ENCODE measurements at regions of chr16 and their contacts with region 1.

Region 1: DNA sequence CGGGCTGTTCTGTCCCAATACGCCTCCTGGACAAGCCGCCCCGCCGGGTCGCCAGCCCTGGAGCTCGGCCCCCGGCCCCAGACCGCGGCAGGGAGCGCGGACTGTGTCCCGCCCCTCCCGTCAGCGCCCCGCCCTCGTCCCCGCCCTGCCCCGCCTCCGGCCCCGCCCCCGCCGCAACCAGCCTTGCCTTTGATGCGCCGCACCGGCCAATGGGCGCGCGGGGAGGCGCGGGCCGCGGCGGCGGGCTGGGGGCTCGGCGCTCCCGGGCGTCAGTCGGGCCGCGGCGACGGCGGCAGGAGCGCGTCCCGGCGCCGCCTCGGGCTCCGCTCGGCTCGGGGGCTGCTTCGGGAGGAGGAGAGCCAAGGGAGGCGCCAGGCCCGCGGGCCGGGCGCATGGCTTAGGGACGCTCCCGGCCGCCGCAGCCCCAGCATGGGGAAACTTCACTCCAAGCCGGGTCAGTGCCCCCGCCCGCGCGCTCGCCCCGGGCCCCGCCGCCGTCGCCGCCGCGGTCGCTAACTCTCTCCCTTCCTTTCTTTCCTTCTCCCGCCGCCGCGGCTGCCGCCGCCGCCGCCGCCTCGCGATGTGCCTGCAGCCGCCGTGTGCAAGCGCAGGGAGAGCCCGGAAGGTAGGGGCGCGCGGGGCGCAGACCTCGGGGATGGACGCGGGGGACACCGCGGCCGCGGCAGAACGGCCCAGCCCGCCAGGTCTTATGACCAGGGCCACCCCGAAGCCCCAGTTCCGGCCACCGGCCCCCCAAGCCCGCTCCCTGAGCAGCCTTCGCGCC is at the start of gene NKD1:
- DNase-seq: peak; percentile 72
- ATAC-seq: peak; percentile 88
- H3K4me3 Mint-ChIP-seq: peak within 1 kb of the TSS; percentile 91
- H3K27ac Mint-ChIP-seq: peak within 1 kb of the TSS; percentile 70
- H3K4me1 Mint-ChIP-seq: peaks cover 7% of the 10 kb centered on the region
- H3K27me3 Mint-ChIP-seq: peaks cover 10% of the 10 kb centered on the region
- CTCF ChIP-seq: no peak
- total RNA-seq, gene NKD1: 0.49 and 1.5 TPM in 2 replicates

Region 2: DNA sequence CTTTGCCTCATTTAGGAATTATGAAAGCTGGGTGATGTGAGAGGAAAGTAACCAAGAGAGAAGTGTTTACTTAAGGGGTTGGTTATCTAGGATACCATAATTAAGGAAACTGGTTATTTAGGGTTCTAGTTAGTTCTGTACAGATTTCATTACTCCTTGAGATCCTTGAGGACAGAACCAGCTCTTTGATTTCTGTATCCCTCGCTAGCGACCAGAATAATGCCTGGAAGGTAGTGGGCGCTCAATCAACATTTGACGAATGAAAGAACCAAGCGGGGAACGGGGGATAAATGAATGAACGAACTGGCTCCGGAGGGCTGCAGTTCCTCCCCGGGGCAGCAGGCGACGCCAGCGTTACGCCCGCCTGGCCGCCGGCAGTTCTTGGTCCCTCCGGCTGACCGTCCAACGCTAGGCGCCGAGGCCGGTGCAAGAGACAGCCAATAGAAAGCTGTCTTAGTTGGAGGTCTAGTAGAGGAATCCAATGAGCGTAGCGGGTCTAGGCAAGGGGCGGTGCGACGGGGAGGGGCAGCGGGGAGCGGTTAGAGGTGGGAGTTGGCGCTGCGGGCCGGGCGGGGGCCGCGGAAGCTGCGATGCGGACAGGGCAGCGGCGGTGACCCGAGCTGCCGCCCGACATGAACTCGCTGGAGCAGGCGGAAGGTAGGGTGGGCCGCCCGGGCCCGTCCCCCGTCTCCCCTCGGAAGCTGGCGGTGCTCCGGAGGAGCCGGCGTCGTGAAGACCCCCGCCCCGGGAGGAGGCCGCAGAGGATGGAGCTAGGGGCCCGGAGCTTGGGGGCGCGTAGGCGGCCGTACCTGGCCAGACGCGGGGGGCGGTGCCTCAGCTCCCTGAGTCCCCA is 523.4 kb before region 1 on chr16 and contains the start of gene CNEP1R1:
- CTCF ChIA-PET with region 1: no interaction called
- POLR2A ChIA-PET with region 1: no interaction called
- intact Hi-C with region 1: loop called (anchors 5 kb)
- DNase-seq: peak; percentile 87
- ATAC-seq: peak; percentile 95
- H3K4me3 Mint-ChIP-seq: peak within 1 kb of the TSS; percentile 96
- H3K27ac Mint-ChIP-seq: peak within 1 kb of the TSS; percentile 83
- H3K4me1 Mint-ChIP-seq: peaks cover 19% of the 10 kb centered on the region
- H3K27me3 Mint-ChIP-seq: peaks cover 6% of the 10 kb centered on the region
- CTCF ChIP-seq: peak; percentile 82
- total RNA-seq, gene CNEP1R1: 22.1 and 31.0 TPM in 2 replicates

Region 3: DNA sequence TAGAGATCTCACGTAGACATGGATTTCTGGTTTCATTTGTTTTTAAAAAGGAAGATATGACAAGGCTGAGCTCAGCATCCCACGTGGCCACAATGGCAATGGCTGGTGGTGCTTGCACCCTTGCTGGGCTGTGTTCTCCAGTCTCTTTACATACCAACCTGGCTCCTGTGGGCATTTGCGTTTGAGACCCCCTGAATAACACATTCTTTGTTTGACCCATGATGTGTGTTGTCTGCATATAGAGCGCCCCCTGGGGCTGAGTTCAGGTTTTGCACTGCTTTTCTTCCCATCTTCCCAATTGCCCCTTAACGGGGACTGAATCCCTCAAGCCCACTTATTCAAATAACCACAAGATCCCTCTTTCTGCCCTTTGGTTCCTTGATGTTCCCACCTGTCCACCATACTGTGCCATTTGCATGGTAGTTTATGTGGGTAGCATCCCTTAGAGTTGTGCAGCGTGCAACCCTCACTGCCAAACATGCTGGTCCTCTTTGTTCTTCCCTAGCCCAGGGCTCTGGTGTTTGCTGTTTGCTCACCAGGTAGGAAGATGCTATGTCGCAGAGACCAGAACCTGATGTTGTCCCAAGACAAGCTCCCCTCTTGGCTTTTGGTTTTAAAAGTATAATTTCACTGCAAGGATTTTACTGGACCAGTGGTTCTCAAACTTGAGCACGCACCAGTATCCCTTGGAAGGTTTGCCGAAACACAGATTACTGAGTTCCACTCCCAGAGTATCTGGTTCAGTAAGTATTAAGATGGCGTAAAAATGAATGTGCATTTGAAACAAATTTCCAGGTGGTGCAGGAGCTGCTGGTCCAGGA is 38.6 kb before region 1 on chr16:
- CTCF ChIA-PET with region 1: no interaction called
- POLR2A ChIA-PET with region 1: no interaction called
- intact Hi-C with region 1: no loop called
- DNase-seq: no peak
- ATAC-seq: no peak
- H3K4me3 Mint-ChIP-seq: no peak overlapping the region
- H3K27ac Mint-ChIP-seq: no peak overlapping the region
- H3K4me1 Mint-ChIP-seq: no peaks in the 10 kb centered on the region
- H3K27me3 Mint-ChIP-seq: peaks cover 9% of the 10 kb centered on the region
- CTCF ChIP-seq: no peak

Region 4: GRCh38 chr16:50593410-50594150 is 45.3 kb after region 1 on chr16:
- CTCF ChIA-PET with region 1: interaction called, 4 read pairs
- POLR2A ChIA-PET with region 1: interaction called, 4 read pairs
- intact Hi-C with region 1: loop called (anchors 1 kb)
- DNase-seq: no peak
- ATAC-seq: no peak
- H3K4me3 Mint-ChIP-seq: no peak overlapping the region
- H3K27ac Mint-ChIP-seq: no peak overlapping the region
- H3K4me1 Mint-ChIP-seq: peaks cover 17% of the 10 kb centered on the region
- H3K27me3 Mint-ChIP-seq: no peaks in the 10 kb centered on the region
- CTCF ChIP-seq: no peak

Region 5: GRCh38 chr16:50606431-50607050 is 58.2 kb after region 1 on chr16:
- CTCF ChIA-PET with region 1: no interaction called
- POLR2A ChIA-PET with region 1: no interaction called
- intact Hi-C with region 1: no loop called
- DNase-seq: no peak
- ATAC-seq: no peak
- H3K4me3 Mint-ChIP-seq: no peak overlapping the region
- H3K27ac Mint-ChIP-seq: no peak overlapping the region
- H3K4me1 Mint-ChIP-seq: no peaks in the 10 kb centered on the region
- H3K27me3 Mint-ChIP-seq: no peaks in the 10 kb centered on the region
- CTCF ChIP-seq: no peak

Region 6: DNA sequence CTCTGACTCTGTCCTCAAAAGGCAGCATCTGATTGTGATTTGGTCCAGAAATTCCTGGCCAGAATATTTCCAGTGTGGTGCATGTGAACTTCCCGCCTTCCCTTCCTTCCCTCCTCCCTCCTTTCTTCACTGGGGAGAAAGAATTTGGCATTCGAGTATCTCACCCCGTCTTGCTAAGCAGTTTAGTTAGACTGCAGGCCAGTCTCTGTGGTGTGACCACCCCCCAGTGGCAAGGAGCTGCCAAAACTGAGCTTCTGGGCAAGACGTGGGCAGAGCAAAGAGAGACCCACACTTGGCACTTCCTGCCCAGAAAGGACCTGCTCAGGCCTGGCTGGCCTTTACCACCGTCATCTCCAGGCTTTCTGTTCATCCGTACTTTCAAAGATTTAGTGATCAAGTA is 96.4 kb after region 1 on chr16:
- CTCF ChIA-PET with region 1: interaction called, 5 read pairs
- POLR2A ChIA-PET with region 1: interaction called, 4 read pairs
- intact Hi-C with region 1: loop called (anchors 1 kb)
- DNase-seq: no peak
- ATAC-seq: peak; percentile 72
- H3K4me3 Mint-ChIP-seq: no peak overlapping the region
- H3K27ac Mint-ChIP-seq: no peak overlapping the region
- H3K4me1 Mint-ChIP-seq: no peaks in the 10 kb centered on the region
- H3K27me3 Mint-ChIP-seq: peaks cover 19% of the 10 kb centered on the region
- CTCF ChIP-seq: no peak

Region 7: GRCh38 chr16:50681021-50681885 is 132.9 kb after region 1 on chr16 and contains the start of gene SNX20:
- CTCF ChIA-PET with region 1: interaction called, 3 read pairs
- POLR2A ChIA-PET with region 1: no interaction called
- intact Hi-C with region 1: loop called (anchors 5 kb)
- DNase-seq: peak; percentile 49
- ATAC-seq: peak; percentile 78
- H3K4me3 Mint-ChIP-seq: peak within 1 kb of the TSS; percentile 86
- H3K27ac Mint-ChIP-seq: peak within 1 kb of the TSS; percentile 93
- H3K4me1 Mint-ChIP-seq: peaks cover 79% of the 10 kb centered on the region
- H3K27me3 Mint-ChIP-seq: no peaks in the 10 kb centered on the region
- CTCF ChIP-seq: no peak
- total RNA-seq, gene SNX20: 33.1 and 34.5 TPM in 2 replicates

Measured in activated B cell treated with CpG ODN at 0.5 μM for 24 hours (primary cell).